ENCODE measurements at regions of chr14 and their contacts with region 1.

Region 1: DNA sequence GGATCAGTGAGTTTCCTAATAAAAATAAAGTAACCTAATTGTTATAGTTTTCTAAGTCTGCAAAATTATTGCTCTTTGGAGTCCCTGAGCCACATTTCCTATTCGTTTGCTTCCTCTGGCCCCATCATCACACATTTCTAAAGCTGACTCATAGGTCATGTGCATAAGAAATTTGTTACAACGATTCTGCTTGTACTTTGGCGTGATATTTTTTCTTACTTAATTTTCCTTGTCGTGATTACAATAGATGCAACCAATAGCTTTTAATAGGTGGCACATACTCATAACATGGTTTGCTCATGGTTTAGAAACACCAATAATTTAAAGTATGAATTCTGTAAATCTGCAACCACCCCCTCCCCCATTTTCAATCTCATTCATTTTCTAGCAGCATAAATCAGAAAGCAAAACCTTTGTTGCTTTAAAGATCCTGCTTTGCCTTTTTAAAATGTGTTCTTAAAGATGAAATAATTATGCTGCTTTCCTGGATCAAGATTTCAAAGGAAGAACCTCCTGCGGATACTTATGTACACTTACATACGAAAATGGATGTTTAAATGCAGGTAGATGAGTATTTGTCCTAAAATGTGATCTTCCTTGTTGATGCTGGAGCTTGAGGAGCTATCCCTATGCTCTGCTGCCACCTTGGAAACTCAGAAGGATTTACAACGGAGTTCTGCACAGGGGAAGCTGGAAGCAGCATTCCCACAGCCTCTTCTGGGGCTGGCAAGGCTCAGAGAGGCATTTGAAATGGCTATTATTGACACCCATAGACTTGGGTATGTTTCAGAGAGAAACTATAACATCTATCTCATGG is 1.7 kb upstream of the FLRT2 start:
- DNase-seq: peak in 1 of 2 experiments; percentile 18
- H3K4me3 ChIP-seq: peak overlapping the region; percentile 40; the same call in 1 of the 2 replicates
- H3K27ac ChIP-seq: no peak overlapping the region
- H3K4me1 ChIP-seq: no peaks in the 10 kb centered on the region
- H3K27me3 ChIP-seq: peaks cover 31% of the 10 kb centered on the region
- CTCF ChIP-seq: no peak; the same call in 1 of the 2 replicates

Region 2: DNA sequence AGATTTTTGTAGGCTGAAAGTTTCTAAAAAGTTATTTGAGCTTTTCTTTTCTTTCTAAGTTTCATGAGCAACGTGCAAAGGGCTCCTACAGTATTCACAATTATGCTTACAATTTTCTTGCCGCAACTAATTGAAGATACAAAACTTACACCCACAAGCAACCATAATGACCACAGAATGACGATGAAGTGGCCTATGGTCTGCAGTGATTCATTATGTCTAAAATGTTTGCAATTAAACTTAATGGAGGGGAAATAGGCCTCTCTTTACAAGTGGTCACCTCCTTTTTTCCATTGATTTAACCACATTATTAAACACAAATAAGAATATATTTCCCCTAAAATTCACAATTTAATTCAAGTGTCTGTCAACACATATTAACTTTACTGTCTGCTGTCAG is 731.0 kb before region 1 on chr14:
- CTCF ChIA-PET with region 1: no interaction called
- POLR2A ChIA-PET with region 1: no interaction called
- intact Hi-C with region 1: no loop called
- DNase-seq: no peak
- H3K4me3 ChIP-seq: no peak overlapping the region
- H3K27ac ChIP-seq: no peak overlapping the region
- H3K4me1 ChIP-seq: no peaks in the 10 kb centered on the region
- H3K27me3 ChIP-seq: no peaks in the 10 kb centered on the region
- CTCF ChIP-seq: no peak

Region 3: GRCh38 chr14:85415015-85415712 is 113.1 kb before region 1 on chr14:
- CTCF ChIA-PET with region 1: no interaction called
- POLR2A ChIA-PET with region 1: no interaction called
- intact Hi-C with region 1: loop called (anchors 10 kb)
- DNase-seq: peak in 1 of 2 experiments; percentile 27
- H3K4me3 ChIP-seq: no peak overlapping the region
- H3K27ac ChIP-seq: no peak overlapping the region
- H3K4me1 ChIP-seq: no peaks in the 10 kb centered on the region
- H3K27me3 ChIP-seq: no peaks in the 10 kb centered on the region
- CTCF ChIP-seq: no peak

Region 4: DNA sequence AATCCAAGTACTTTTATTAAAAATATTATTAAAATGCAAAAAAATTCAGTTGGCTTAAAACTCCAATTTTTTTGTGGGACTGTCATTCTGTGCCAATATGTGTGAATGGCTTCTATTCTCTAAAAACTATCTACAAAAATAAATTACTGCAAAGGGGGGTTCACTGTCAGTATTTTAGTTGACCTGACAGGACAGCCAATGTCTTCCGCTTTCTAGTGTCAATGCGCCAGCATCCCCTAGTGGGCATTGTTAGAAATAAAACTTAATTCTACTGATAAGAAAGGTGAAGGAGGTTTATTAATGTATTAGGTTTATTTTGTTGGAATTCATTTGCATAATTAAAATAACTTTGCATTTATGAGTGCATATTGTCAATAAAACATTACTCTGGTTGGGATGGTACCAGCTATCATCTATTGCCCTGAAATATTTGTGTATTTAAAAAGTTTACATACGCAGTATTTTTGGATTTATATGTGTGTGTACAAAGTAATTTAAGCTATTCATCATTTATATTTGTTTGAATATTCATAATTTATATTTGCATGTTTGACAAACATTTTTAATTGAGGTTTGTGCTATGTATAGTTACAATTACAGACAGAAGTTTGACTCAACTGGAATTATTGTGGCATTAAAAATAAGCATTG is 528.9 kb after region 1 on chr14:
- CTCF ChIA-PET with region 1: no interaction called
- POLR2A ChIA-PET with region 1: no interaction called
- intact Hi-C with region 1: loop called (anchors 10 kb)
- DNase-seq: peak in 1 of 2 experiments; percentile 1
- H3K4me3 ChIP-seq: no peak overlapping the region
- H3K27ac ChIP-seq: no peak overlapping the region
- H3K4me1 ChIP-seq: no peaks in the 10 kb centered on the region
- H3K27me3 ChIP-seq: no peaks in the 10 kb centered on the region
- CTCF ChIP-seq: peak; percentile 72